ENCODE measurements at regions of chrX and their contacts with region 1.

Region 1: GRCh38 chrX:134753718-134754008 is 95.4 kb upstream of the PLAC1 start:
- DNase-seq: peak in 1 of 2 experiments; percentile 9
- H3K4me3 ChIP-seq: no peak overlapping the region
- H3K4me3 Mint-ChIP-seq: no peak overlapping the region
- H3K27ac Mint-ChIP-seq: no peak overlapping the region
- H3K4me1 ChIP-seq: peaks cover 14% of the 10 kb centered on the region
- H3K4me1 Mint-ChIP-seq: peaks cover 16% of the 10 kb centered on the region
- H3K27me3 ChIP-seq: no peaks in the 10 kb centered on the region
- H3K27me3 Mint-ChIP-seq: no peaks in the 10 kb centered on the region
- CTCF ChIP-seq: no peak

Region 2: GRCh38 chrX:134520860-134521390 is 232.7 kb before region 1 on chrX:
- CTCF ChIA-PET with region 1: interaction called, 7 read pairs
- POLR2A ChIA-PET with region 1: no interaction called
- intact Hi-C with region 1: loop called (anchors 1 kb)
- DNase-seq: peak; percentile 55 to 61
- H3K4me3 ChIP-seq: no peak overlapping the region
- H3K4me3 Mint-ChIP-seq: no peak overlapping the region
- H3K27ac Mint-ChIP-seq: no peak overlapping the region
- H3K4me1 ChIP-seq: no peaks in the 10 kb centered on the region
- H3K4me1 Mint-ChIP-seq: no peaks in the 10 kb centered on the region
- H3K27me3 ChIP-seq: no peaks in the 10 kb centered on the region
- H3K27me3 Mint-ChIP-seq: no peaks in the 10 kb centered on the region
- CTCF ChIP-seq: peak; percentile 47 to 67

Region 3: GRCh38 chrX:134670134-134670924 is 83.3 kb before region 1 on chrX:
- CTCF ChIA-PET with region 1: no interaction called
- POLR2A ChIA-PET with region 1: no interaction called
- intact Hi-C with region 1: no loop called
- DNase-seq: peak; percentile 47 to 60
- H3K4me3 ChIP-seq: no peak overlapping the region
- H3K4me3 Mint-ChIP-seq: no peak overlapping the region
- H3K27ac Mint-ChIP-seq: no peak overlapping the region
- H3K4me1 ChIP-seq: peaks cover 12% of the 10 kb centered on the region
- H3K4me1 Mint-ChIP-seq: no peaks in the 10 kb centered on the region
- H3K27me3 ChIP-seq: no peaks in the 10 kb centered on the region
- H3K27me3 Mint-ChIP-seq: no peaks in the 10 kb centered on the region
- CTCF ChIP-seq: no peak

Region 4: DNA sequence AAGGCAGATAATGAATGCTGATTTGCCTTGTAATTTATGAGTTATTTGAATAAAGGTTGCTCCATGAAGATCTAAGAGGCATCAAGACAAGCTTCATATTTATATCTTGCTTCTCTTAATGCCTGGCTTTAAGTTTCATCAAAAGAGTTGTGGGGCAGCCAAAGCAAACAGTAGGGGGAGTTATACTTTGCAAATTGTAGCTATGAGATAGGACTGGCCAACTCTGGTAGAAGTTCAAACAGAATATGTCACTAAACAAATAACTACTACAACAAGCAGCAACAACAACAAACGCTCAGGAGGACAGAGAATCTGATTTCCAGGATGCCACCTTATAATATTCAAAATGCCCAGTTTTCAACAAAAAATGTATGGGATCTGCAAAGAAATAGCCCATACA is 26.3 kb before region 1 on chrX:
- CTCF ChIA-PET with region 1: interaction called, 3 read pairs
- POLR2A ChIA-PET with region 1: no interaction called
- intact Hi-C with region 1: loop called (anchors 1 kb)
- DNase-seq: no peak
- H3K4me3 ChIP-seq: no peak overlapping the region
- H3K4me3 Mint-ChIP-seq: no peak overlapping the region
- H3K27ac Mint-ChIP-seq: no peak overlapping the region
- H3K4me1 ChIP-seq: no peaks in the 10 kb centered on the region
- H3K4me1 Mint-ChIP-seq: no peaks in the 10 kb centered on the region
- H3K27me3 ChIP-seq: no peaks in the 10 kb centered on the region
- H3K27me3 Mint-ChIP-seq: no peaks in the 10 kb centered on the region
- CTCF ChIP-seq: peak in 1 of 2 experiments; percentile 37

Region 5: GRCh38 chrX:134803551-134804183 is 50.0 kb after region 1 on chrX:
- CTCF ChIA-PET with region 1: no interaction called
- POLR2A ChIA-PET with region 1: no interaction called
- intact Hi-C with region 1: no loop called
- DNase-seq: peak in 1 of 2 experiments; percentile 16
- H3K4me3 ChIP-seq: no peak overlapping the region
- H3K4me3 Mint-ChIP-seq: peak overlapping the region; percentile 18
- H3K27ac Mint-ChIP-seq: peak overlapping the region; percentile 83
- H3K4me1 ChIP-seq: peaks cover 25% of the 10 kb centered on the region
- H3K4me1 Mint-ChIP-seq: peaks cover 18% of the 10 kb centered on the region
- H3K27me3 ChIP-seq: no peaks in the 10 kb centered on the region
- H3K27me3 Mint-ChIP-seq: no peaks in the 10 kb centered on the region
- CTCF ChIP-seq: no peak

Region 6: DNA sequence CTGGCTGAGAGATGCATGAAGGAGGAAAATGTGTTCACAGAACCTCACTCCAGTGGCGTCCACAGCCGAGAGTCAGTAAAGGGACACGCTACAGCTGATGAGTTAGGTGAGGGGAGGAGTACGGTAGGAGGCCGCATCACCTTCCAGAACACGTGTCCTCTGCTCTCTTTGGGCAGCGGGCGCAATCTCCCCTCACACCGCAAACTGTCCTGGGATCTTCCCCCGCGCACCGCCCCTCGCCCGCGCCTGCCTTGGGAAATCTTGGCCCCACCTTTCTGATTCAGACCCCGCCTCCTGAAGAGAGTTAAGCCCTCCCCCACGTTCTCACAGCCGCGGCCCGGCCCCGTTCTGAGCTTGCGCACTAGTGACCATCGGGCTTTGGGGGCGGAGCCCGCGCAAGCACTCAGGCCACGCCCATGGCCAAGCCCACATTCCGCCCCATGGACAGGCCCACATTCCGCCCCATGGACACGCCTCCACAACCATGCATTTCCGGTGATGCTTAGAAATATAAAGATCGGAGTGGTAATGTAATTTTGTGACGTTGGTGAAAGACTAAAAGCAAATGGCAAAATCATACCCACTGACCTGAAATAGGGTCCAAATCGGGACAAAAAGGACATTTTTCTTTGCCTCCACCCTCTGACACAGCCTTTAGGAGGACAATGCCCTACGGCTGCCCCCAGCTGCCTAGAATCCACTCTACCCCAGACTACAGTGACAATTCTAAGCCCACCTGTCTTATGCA is 250.4 kb after region 1 on chrX:
- CTCF ChIA-PET with region 1: no interaction called
- POLR2A ChIA-PET with region 1: no interaction called
- intact Hi-C with region 1: no loop called
- DNase-seq: peak; percentile 91 to 93
- H3K4me3 ChIP-seq: peak overlapping the region; percentile 53
- H3K4me3 Mint-ChIP-seq: peak overlapping the region; percentile 80
- H3K27ac Mint-ChIP-seq: peak overlapping the region; percentile 63
- H3K4me1 ChIP-seq: peaks cover 7% of the 10 kb centered on the region; the same call in 1 of the 2 replicates
- H3K4me1 Mint-ChIP-seq: peaks cover 6% of the 10 kb centered on the region
- H3K27me3 ChIP-seq: no peaks in the 10 kb centered on the region
- H3K27me3 Mint-ChIP-seq: no peaks in the 10 kb centered on the region
- CTCF ChIP-seq: no peak

Measured in Caco-2 (cell line).